ENCODE measurements at regions of chr10 and their contacts with region 1.

Region 1: GRCh38 chr10:75019370-75019769 is 92.1 kb upstream of the SAMD8 start:
- DNase-seq: no peak
- H3K4me3 Mint-ChIP-seq: no peak overlapping the region
- H3K27ac Mint-ChIP-seq: no peak overlapping the region
- H3K4me1 Mint-ChIP-seq: peaks cover 43% of the 10 kb centered on the region
- H3K27me3 Mint-ChIP-seq: no peaks in the 10 kb centered on the region

Region 2: DNA sequence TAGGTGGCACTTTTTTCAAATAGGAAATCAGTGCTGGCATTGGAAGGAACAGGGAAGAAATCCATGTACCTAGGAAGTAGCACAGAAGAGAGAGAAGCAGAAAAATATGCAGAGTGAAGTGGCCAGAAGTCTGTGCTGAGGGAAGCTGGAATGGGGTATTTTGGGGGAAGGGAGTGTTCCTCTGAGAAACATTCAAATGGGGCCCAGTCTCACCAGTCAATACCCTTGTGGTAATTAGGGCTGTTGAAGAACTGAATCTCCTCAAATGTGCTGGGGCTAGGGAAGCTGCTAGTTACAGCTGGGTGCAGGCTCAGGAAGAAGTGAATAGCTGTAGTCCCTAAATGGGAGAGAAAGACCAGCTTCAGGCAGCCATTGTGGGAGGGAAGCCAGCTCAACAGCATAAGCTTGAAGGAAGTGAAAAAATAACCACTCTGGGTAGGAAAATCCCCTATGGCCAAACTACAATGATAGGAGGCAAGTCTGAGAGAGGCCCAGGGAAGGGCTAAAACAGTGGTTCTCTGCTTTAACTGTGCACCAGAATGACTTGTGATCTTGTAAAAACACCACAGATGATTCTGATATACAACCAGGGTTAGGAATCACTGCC is 1215.6 kb before region 1 on chr10:
- intact Hi-C with region 1: no loop called
- DNase-seq: peak; percentile 6
- H3K4me3 Mint-ChIP-seq: peak overlapping the region; percentile 58
- H3K27ac Mint-ChIP-seq: peak overlapping the region; percentile 89
- H3K4me1 Mint-ChIP-seq: peaks cover 43% of the 10 kb centered on the region
- H3K27me3 Mint-ChIP-seq: no peaks in the 10 kb centered on the region

Region 3: GRCh38 chr10:74262856-74263255 is 756.5 kb before region 1 on chr10:
- intact Hi-C with region 1: loop called (anchors 1 kb)
- DNase-seq: no peak
- H3K4me3 Mint-ChIP-seq: no peak overlapping the region
- H3K27ac Mint-ChIP-seq: no peak overlapping the region
- H3K4me1 Mint-ChIP-seq: peaks cover 13% of the 10 kb centered on the region
- H3K27me3 Mint-ChIP-seq: no peaks in the 10 kb centered on the region

Region 4: GRCh38 chr10:74502963-74503608 is 516.3 kb before region 1 on chr10:
- intact Hi-C with region 1: loop called (anchors 10 kb)
- DNase-seq: no peak
- H3K4me3 Mint-ChIP-seq: no peak overlapping the region
- H3K27ac Mint-ChIP-seq: peak overlapping the region; percentile 9
- H3K4me1 Mint-ChIP-seq: peaks cover 40% of the 10 kb centered on the region
- H3K27me3 Mint-ChIP-seq: no peaks in the 10 kb centered on the region

Region 5: GRCh38 chr10:74854610-74855009 is 164.8 kb before region 1 on chr10:
- intact Hi-C with region 1: loop called (anchors 1 kb)
- DNase-seq: no peak
- H3K4me3 Mint-ChIP-seq: peak overlapping the region; percentile 51
- H3K27ac Mint-ChIP-seq: peak overlapping the region; percentile 80
- H3K4me1 Mint-ChIP-seq: peaks cover 31% of the 10 kb centered on the region
- H3K27me3 Mint-ChIP-seq: no peaks in the 10 kb centered on the region

Region 6: GRCh38 chr10:74917481-74918077 is 101.8 kb before region 1 on chr10:
- intact Hi-C with region 1: no loop called
- DNase-seq: no peak
- H3K4me3 Mint-ChIP-seq: no peak overlapping the region
- H3K27ac Mint-ChIP-seq: no peak overlapping the region
- H3K4me1 Mint-ChIP-seq: peaks cover 18% of the 10 kb centered on the region
- H3K27me3 Mint-ChIP-seq: no peaks in the 10 kb centered on the region

Region 7: GRCh38 chr10:74977913-74978847 is 41.2 kb before region 1 on chr10:
- intact Hi-C with region 1: loop called (anchors 5 kb)
- DNase-seq: peak; percentile 68
- H3K4me3 Mint-ChIP-seq: peak overlapping the region; percentile 47
- H3K27ac Mint-ChIP-seq: peak overlapping the region; percentile 75
- H3K4me1 Mint-ChIP-seq: peaks cover 55% of the 10 kb centered on the region
- H3K27me3 Mint-ChIP-seq: no peaks in the 10 kb centered on the region

Region 8: GRCh38 chr10:75640803-75641202 is 621.4 kb after region 1 on chr10:
- intact Hi-C with region 1: no loop called
- DNase-seq: no peak
- H3K4me3 Mint-ChIP-seq: no peak overlapping the region
- H3K27ac Mint-ChIP-seq: no peak overlapping the region
- H3K4me1 Mint-ChIP-seq: no peaks in the 10 kb centered on the region
- H3K27me3 Mint-ChIP-seq: peaks cover 8% of the 10 kb centered on the region